ENCODE measurements at regions of chr17 and their contacts with region 1.

Region 1: GRCh38 chr17:72985881-72986720 is 106.4 kb downstream of the SLC39A11 start:
- DNase-seq: peak; percentile 77
- ATAC-seq: peak; percentile 89

Region 2: DNA sequence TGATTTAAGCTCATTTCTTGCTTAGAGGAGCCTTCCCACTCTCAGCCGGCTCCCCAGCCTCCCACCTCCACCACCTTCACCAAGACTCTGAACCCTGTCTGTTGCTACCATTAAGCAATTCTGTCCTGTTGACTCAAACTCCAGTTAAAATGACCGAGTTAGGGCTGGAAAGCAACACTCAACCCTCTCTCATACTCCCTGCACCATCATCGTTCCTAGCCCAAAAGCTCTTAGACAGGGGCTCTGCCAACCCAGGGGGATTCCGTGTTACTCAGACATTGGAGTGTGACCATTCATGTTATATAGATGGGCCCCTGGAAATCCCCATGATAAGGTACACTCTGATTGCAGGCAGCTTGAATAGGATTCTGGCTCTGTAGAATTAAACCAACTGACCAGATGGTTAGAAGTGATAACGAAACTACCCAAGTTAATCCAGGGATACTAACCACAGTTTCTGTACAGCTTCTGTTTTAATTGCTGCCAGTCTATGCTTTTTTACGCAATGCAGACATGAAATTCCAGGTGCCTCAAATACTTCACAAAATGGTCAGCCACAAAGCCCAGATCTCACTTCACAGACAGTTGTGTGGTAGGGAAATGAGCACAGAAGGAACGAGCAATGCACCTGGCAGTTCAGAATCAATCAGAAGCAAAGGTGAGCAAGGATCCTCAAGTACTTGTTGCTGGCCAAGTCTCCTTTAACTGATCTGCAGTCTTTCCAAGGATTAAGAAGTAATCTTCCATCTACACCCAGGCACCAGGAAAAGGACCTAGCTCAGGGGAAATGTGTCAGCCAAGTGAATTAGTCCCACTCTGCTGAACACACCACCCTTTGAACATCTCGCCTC is 180.9 kb after region 1 on chr17:
- intact Hi-C with region 1: loop called (anchors 10 kb)
- DNase-seq: no peak
- ATAC-seq: no peak

Region 3: GRCh38 chr17:74235040-74235581 is 1249.0 kb after region 1 on chr17:
- intact Hi-C with region 1: no loop called
- DNase-seq: no peak
- ATAC-seq: peak; percentile 77